PC-3 (cell line): ENCODE measurements at regions of chr1 and their contacts with region 1.

Region 1: GRCh38 chr1:100229681-100230443 is 19.8 kb downstream of the DBT start:
- DNase-seq: no peak
- ATAC-seq: no peak
- H3K4me3 ChIP-seq: no peak overlapping the region
- H3K27ac ChIP-seq: no peak overlapping the region
- H3K4me1 ChIP-seq: no peaks in the 10 kb centered on the region
- H3K27me3 ChIP-seq: no peaks in the 10 kb centered on the region
- CTCF ChIP-seq: no peak

Region 2: DNA sequence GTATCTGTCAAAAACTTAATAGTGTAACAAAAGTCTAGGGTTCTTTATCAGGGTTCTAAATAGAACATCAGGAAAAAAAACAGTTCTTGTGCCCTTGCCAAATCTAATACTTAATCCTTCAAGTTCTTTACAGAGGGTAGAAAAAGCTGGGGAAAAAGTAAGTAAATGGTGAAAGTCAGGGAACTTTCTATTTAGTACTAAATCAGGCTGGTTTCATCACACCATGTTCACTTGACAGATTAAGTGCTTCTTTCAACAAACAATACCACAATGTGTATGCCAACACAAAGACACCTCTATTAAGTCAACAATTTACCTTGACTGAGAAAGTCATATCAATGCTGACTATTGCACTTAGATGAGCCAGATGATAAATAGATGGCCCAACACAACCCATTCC is 10.1 kb after region 1 on chr1:
- CTCF ChIA-PET with region 1: no interaction called
- POLR2A ChIA-PET with region 1: interaction called, 12 read pairs
- intact Hi-C with region 1: no loop called
- DNase-seq: no peak
- ATAC-seq: no peak
- H3K4me3 ChIP-seq: no peak overlapping the region
- H3K27ac ChIP-seq: no peak overlapping the region
- H3K4me1 ChIP-seq: no peaks in the 10 kb centered on the region
- H3K27me3 ChIP-seq: no peaks in the 10 kb centered on the region
- CTCF ChIP-seq: no peak

Region 3: GRCh38 chr1:100265931-100266740 is 36.3 kb after region 1 on chr1 and contains the start of gene RTCA:
- CTCF ChIA-PET with region 1: no interaction called
- POLR2A ChIA-PET with region 1: no interaction called
- intact Hi-C with region 1: no loop called
- DNase-seq: peak; percentile 96
- ATAC-seq: peak; percentile 96
- H3K4me3 ChIP-seq: peak within 1 kb of the TSS; percentile 97
- H3K27ac ChIP-seq: peak within 1 kb of the TSS; percentile 23
- H3K4me1 ChIP-seq: peaks cover 10% of the 10 kb centered on the region
- H3K27me3 ChIP-seq: no peaks in the 10 kb centered on the region
- CTCF ChIP-seq: no peak
- total RNA-seq, gene RTCA: 34.4 and 41.7 TPM in 2 replicates